Breast epithelium (tissue), 4 donors: ENCODE measurements at regions of chr2 and their contacts with region 1.

Region 1: DNA sequence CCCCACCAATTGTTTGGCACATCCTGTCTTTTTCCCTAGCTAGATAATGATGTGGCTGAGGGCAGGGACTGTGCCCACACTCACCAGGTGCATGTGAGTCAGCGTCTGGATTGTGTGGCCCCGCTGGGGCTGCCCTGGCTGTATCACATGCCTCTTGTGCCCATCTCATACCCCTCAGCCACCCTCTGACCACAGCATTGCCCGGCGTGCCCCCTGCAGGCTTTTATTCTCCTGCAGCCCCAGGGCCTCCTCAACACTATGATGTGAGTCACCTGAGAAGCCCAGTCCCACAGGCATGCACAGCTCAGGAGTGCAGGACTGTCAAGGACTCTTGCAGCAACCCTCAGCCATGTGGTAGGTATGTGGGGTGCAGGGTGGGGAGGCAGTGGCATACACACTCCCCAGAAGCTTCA is 14.8 kb upstream of the STEAP3 start:
- DNase-seq: no peak
- H3K4me3 ChIP-seq: no peak overlapping the region
- H3K27ac ChIP-seq: no peak overlapping the region
- H3K4me1 ChIP-seq: peaks cover 0 to 7% of the 10 kb centered on the region in 2 donors
- H3K27me3 ChIP-seq: no peaks in the 10 kb centered on the region
- CTCF ChIP-seq: no peak
- POLR2A ChIP-seq: no peak

Region 2: DNA sequence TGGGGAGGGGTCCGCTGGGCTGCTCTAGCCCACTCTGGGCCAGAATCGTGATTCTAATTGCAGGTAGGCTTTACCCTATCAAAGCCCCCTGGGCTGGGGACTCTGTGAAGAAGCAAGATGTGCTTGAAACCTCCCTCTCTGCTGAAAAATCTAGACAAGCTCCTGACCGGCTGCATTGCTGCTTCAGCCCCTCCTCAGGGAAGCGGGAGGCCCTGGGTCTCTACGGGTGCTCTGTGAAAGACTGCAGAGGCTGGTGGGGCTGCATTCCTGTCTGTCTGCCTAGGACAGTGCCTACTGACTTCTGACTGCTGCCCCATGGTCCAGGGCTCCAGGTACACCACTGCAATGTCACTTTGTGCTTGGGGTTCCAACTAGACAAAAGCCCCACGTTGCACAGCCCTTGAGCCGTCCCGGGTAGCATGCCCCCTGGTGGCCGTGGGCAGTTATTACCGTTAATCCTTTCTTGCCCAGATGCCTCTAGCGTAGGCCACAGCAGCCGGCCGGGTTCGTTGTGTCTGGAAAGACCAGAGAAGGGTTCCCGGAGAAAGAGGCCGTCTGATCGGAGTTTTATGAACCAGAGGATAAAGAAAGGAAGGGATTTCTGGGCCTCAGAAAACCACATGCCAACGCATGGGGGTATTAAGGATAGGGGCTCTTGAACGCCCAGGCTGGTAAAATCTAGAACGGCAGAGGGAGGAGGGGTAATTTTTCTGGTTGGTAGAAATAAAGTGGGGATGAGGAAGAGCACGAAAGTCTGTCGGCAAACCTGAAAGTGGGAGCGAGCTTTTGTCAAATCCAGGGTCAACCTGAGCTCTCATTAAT is 34.4 kb before region 1 on chr2:
- intact Hi-C with region 1: loop called (anchors 5 kb)
- DNase-seq: no peak
- H3K4me3 ChIP-seq: no peak overlapping the region
- H3K27ac ChIP-seq: no peak overlapping the region
- H3K4me1 ChIP-seq: no peaks in the 10 kb centered on the region
- H3K27me3 ChIP-seq: no peaks in the 10 kb centered on the region
- CTCF ChIP-seq: peak; percentile 15 to 32 (median 25)
- POLR2A ChIP-seq: no peak

Region 3: DNA sequence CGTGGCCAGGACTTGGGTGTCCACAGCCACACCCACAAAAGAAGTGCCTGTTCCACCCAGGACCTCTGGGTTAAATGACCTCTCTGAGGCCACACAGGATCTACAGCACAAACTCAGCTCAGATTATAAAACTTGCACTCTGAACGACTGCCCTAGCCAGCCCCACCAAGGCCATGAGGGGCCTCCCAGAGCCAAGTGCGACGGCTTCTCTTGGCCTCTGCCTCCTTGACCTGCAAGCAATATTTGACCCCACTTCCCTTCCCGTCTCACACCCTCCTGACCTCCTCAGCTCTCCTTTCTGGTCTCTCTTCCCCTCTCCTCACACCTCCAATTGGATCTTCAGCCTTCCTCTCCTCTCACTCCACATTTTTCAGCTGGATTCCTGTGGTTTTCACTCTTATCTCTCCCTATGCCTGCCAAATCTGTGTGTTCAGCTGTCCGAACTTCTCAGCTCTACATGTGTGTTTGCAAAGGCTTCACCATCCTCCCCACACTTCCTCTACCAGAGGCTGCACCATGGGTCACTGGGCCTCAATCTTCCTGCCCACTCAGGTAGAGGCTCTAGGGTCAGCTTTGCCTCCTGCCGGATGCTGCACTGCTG is 10.5 kb before region 1 on chr2:
- intact Hi-C with region 1: no loop called
- DNase-seq: no peak
- H3K4me3 ChIP-seq: no peak overlapping the region
- H3K27ac ChIP-seq: no peak overlapping the region
- H3K4me1 ChIP-seq: no peaks in the 10 kb centered on the region
- H3K27me3 ChIP-seq: no peaks in the 10 kb centered on the region
- CTCF ChIP-seq: no peak
- POLR2A ChIP-seq: no peak